ENCODE measurements at regions of chr1 and their contacts with region 1.

Region 1: GRCh38 chr1:161374373-161374772 is 6.7 kb upstream of the CFAP126 start:
- DNase-seq: peak; percentile 36
- CTCF ChIP-seq: no peak

Region 2: GRCh38 chr1:160891474-160891873 is 482.9 kb before region 1 on chr1:
- in situ Hi-C with region 1: no loop called
- DNase-seq: no peak
- CTCF ChIP-seq: no peak

Region 3: DNA sequence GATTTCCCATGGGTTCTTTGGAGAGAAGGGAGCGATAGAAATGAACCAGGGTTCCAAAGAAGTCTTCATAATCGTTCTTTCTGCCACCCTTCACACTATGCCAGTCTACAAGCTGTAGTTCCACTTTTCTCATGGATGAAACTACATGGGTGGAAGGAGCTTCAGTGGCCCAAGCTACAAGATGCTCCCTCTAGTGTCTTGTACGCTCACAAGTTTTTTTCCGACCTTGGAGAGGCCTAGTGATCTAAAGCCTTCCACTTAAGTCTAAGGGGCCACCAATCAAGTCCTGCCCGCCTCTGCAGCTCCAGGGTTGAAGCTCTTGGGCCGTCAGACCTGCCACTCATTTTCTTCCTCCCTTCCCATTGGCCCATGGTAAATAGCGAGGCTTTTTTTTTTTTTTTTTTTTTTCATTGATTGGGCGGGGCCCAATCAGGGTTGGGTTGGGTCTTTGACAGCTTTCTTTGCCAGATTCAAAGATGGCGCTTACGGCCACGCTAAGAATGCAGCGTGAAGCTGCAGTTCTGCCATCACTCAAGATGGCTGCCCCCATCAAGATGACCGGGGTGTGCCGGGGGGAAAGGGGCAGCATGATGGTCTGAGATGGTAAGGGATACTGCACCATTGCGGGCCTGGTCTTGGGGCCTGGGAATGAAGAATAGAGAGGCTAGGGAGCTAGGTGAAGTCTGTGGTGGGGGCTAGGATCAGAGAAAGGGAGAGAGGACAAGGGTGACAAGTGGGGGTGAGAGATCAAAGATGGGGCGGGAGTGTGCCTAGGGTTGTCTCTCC is 148.6 kb before region 1 on chr1 and contains the start of gene TOMM40L:
- in situ Hi-C with region 1: loop called (anchors 10 kb)
- DNase-seq: peak; percentile 93
- CTCF ChIP-seq: peak; percentile 50

Region 4: DNA sequence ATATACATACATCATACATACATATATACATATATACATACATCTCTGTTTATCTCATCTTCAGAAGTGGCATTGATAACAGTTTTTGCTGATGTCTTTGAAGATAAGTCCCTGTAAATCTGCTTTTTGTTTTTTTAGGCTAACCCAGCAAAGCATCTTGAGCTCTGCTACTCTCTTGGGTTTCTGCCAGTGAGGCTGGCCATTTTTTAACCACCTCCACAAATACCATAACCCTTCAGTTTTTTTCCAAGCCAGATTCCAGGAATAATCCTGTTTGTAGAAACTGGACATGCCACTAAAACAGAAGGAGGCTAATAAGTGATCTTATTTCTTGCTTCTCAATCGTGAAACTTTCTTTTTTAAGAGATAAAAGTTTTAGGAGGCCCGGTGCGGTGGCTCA is 38.6 kb before region 1 on chr1:
- in situ Hi-C with region 1: no loop called
- DNase-seq: no peak
- CTCF ChIP-seq: no peak

Region 5: GRCh38 chr1:161427733-161428516 is 53.6 kb after region 1 on chr1:
- in situ Hi-C with region 1: no loop called
- DNase-seq: peak; percentile 58
- CTCF ChIP-seq: no peak